PC-3 (cell line): ENCODE measurements at regions of chr1 and their contacts with region 1.

Region 1: DNA sequence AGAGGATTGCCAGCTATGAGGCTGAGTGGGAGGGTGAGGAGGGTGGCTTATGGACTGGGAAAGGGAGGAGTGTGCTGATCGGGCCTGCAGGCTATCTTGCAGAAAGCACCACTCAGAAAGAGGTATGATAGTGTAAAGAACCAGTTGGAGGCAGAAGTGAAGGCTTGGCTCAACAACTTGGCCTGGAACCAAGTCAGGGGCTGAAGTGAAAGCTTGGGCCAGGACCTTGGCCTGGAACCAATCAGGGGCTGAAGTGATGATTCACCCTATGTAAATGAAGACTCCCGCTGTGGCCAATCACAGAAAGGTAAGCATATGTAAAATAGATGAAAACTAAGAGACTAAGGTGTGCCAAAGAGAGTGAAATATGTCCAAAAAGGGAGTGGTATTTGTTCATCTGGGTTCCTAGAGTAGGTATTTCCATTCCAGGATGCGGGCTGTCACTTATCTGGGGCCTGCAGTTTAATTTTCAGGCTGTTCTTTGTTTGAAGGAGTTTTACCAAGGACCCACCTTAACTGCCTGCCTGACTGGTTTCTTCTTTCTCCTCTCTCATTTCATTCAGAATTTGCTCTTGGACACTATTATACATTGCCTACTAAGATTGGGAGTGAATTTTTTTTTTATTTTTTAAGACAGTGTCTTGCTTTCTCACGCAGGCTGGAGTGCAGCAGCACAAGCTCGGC is 5.1 kb upstream of the RFX5 start:
- DNase-seq: peak; percentile 57
- ATAC-seq: no peak
- H3K4me3 ChIP-seq: no peak overlapping the region
- H3K27ac ChIP-seq: no peak overlapping the region
- H3K4me1 ChIP-seq: peaks cover 5% of the 10 kb centered on the region; the same call in 1 of the 2 replicates
- H3K27me3 ChIP-seq: no peaks in the 10 kb centered on the region
- CTCF ChIP-seq: no peak

Region 2: GRCh38 chr1:151266315-151266714 is 85.8 kb before region 1 on chr1:
- CTCF ChIA-PET with region 1: interaction called, 11 read pairs
- POLR2A ChIA-PET with region 1: no interaction called
- intact Hi-C with region 1: no loop called
- DNase-seq: no peak
- ATAC-seq: no peak
- H3K4me3 ChIP-seq: no peak overlapping the region
- H3K27ac ChIP-seq: no peak overlapping the region
- H3K4me1 ChIP-seq: no peaks in the 10 kb centered on the region
- H3K27me3 ChIP-seq: no peaks in the 10 kb centered on the region
- CTCF ChIP-seq: no peak